ENCODE measurements at regions of chr12 and their contacts with region 1.

Region 1: GRCh38 chr12:14774906-14775762 is 28.1 kb downstream of the WBP11 start:
- DNase-seq: peak; percentile 65
- ATAC-seq: peak; percentile 1
- H3K4me3 ChIP-seq: peak overlapping the region; percentile 92
- H3K27ac ChIP-seq: peak overlapping the region; percentile 98
- H3K4me1 ChIP-seq: peaks cover 6% of the 10 kb centered on the region
- H3K27me3 ChIP-seq: no peaks in the 10 kb centered on the region
- CTCF ChIP-seq: no peak
- POLR2A ChIP-seq: peak; percentile 48
- RAD21 ChIP-seq: no peak

Region 2: DNA sequence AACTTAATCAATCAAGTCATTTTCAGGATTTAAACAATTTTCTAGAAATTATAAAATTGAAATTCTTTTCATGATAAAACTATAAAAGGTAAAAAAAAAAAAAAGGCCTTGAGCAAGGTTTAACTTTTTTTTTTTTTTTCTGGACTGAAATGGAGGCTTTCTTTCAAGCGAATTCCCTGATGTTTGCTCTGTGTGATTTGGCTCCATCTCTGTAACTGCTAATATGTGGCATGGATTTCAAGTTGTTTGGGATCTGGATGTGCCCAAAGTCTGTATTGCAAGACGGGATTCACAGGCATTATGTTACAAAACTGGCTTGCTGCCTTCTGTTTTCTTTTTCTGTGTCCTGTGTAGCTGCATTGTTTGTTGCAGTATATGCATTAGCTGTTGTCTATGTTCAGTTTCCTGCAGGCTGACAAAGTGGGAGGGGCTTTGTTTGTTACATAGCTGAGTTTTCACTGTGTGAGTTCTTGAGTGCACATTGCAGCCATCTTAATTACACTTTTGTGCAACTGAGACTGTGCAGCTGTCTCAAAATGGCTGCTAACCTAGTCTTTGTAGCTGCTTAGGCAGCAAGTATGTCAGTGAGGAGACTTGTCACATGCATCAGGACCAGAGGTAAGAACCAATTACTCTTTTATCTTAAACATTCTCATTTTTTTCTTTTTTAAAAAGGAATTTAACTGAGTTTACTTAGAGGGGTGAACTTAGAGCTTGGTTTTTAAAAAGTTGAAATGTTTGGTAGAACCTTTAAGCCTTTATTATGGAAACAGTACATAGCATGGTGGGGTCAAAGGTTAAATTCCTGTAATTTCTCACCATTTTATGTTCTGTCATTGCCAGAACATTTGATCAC is 390.1 kb before region 1 on chr12:
- CTCF ChIA-PET with region 1: no interaction called
- POLR2A ChIA-PET with region 1: no interaction called
- dilution Hi-C with region 1: no loop called
- in situ Hi-C with region 1: loop called (anchors 25 kb)
- intact Hi-C with region 1: no loop called
- DNase-seq: peak; percentile 95
- ATAC-seq: peak; percentile 93
- H3K4me3 ChIP-seq: peak overlapping the region; percentile 36
- H3K27ac ChIP-seq: peak overlapping the region; percentile 39; the same call in 1 of the 2 replicates
- H3K4me1 ChIP-seq: no peaks in the 10 kb centered on the region
- H3K27me3 ChIP-seq: no peaks in the 10 kb centered on the region
- CTCF ChIP-seq: no peak
- POLR2A ChIP-seq: no peak
- RAD21 ChIP-seq: no peak

Region 3: DNA sequence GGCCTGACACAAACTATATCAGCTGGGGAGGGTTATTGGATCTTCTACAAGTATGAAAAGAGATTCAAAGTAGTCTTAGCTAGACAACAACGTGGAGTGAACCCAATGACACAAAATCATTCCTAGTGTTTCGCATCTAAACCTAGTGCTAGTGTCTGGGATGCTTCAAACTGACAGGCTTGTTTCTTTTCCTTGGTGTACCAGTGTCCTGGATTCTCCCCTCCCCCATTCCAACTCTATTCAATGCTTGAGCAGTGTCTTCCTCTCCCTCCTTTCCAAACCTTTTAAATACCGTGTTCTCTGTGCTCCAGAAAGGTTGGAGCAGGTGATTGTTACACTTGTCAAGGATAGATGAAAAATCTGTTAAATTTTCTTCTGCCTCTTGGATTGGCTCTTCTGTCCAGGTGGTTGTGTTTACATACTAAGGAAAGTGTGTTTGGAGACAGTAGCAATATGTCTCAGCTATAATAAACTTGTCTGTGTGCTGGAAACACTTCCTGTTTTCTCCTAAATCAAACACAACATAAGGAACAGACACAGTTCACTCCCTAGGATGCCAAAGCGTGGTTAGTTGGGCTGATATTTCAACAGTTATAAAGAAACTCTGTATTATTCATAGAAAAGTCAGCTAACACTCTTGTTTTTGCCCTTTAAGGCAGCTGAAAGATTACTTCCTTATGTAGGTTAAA is 64.4 kb before region 1 on chr12:
- CTCF ChIA-PET with region 1: no interaction called
- POLR2A ChIA-PET with region 1: no interaction called
- dilution Hi-C with region 1: no loop called
- in situ Hi-C with region 1: no loop called
- intact Hi-C with region 1: no loop called
- DNase-seq: no peak
- ATAC-seq: no peak
- H3K4me3 ChIP-seq: no peak overlapping the region
- H3K27ac ChIP-seq: no peak overlapping the region
- H3K4me1 ChIP-seq: no peaks in the 10 kb centered on the region
- H3K27me3 ChIP-seq: peaks cover 4% of the 10 kb centered on the region; the same call in 1 of the 2 replicates
- CTCF ChIP-seq: no peak
- POLR2A ChIP-seq: no peak
- RAD21 ChIP-seq: no peak

Region 4: GRCh38 chr12:14756334-14757143 is 18.6 kb before region 1 on chr12:
- CTCF ChIA-PET with region 1: no interaction called
- POLR2A ChIA-PET with region 1: no interaction called
- dilution Hi-C with region 1: no loop called
- in situ Hi-C with region 1: no loop called
- intact Hi-C with region 1: no loop called
- DNase-seq: no peak
- ATAC-seq: no peak
- H3K4me3 ChIP-seq: no peak overlapping the region
- H3K27ac ChIP-seq: no peak overlapping the region
- H3K4me1 ChIP-seq: no peaks in the 10 kb centered on the region
- H3K27me3 ChIP-seq: no peaks in the 10 kb centered on the region
- CTCF ChIP-seq: 0 out of 2 replicates have a peak, but pooled peaks have one; percentile 14
- POLR2A ChIP-seq: no peak
- RAD21 ChIP-seq: no peak

Region 5: DNA sequence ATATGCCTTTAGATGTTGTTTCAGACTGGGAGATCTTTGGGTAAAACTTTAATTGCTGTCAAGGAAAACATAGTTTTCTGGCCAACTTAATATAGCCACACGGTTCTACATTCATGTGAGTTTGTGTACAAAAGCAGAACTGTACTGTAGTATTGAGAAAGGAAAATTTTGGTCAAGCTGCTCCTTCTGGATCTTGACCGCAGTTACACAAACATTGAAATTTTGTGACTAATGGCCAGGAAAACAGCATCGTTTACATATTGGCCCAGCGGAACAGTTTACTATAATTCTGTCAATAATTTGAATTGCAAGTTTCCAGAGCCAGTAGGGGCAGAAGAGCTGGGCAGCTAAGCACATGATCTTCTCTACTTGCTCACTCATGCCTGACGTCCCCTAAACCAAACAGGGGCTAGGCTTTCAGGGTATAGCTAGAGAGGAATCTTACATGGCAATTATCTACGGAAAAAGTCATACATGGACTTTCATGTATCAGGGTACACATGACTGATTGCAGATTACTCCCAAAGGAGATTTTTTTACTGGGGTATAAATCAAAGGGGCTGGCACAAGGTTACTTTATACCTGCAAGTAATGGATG is 79.6 kb after region 1 on chr12:
- CTCF ChIA-PET with region 1: no interaction called
- POLR2A ChIA-PET with region 1: no interaction called
- dilution Hi-C with region 1: no loop called
- in situ Hi-C with region 1: no loop called
- intact Hi-C with region 1: no loop called
- DNase-seq: peak; percentile 16
- ATAC-seq: peak; percentile 44
- H3K4me3 ChIP-seq: no peak overlapping the region
- H3K27ac ChIP-seq: no peak overlapping the region
- H3K4me1 ChIP-seq: peaks cover 2% of the 10 kb centered on the region; the same call in 1 of the 2 replicates
- H3K27me3 ChIP-seq: no peaks in the 10 kb centered on the region
- CTCF ChIP-seq: no peak
- POLR2A ChIP-seq: no peak
- RAD21 ChIP-seq: no peak

Region 6: DNA sequence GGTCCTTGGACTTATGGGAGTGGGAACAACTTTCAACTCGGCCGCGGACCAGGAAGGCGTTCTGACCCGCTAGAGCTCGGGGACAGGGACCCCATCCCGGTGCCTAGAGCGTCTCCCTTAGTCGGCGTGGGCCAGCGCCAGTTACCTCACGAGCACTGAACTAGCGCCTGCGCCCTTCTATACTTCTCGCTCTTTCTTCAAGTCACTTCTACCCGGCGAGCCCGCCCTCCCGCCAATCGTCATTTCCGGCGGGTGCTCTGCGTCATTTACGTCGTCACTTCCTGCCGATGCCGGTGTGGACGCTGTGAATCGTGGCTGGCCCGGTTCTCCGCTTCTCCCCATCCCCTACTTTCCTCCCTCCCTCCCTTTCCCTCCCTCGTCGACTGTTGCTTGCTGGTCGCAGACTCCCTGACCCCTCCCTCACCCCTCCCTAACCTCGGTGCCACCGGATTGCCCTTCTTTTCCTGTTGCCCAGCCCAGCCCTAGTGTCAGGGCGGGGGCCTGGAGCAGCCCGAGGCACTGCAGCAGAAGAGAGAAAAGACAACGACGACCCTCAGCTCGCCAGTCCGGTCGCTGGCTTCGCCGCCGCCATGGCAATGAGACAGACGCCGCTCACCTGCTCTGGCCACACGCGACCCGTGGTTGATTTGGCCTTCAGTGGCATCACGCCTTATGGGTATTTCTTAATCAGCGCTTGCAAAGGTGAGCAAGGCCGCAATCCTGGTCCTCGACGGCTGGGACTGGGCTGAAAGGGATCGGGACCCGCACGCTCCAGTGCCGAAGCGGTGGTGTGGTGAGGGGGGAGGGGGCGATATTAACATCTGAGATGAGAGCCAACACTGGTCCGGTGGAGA is 1107.2 kb after region 1 on chr12 and contains the start of gene STRAP:
- CTCF ChIA-PET with region 1: no interaction called
- POLR2A ChIA-PET with region 1: no interaction called
- dilution Hi-C with region 1: no loop called
- in situ Hi-C with region 1: loop called (anchors 25 kb)
- intact Hi-C with region 1: no loop called
- DNase-seq: peak; percentile 97
- ATAC-seq: peak; percentile 96
- H3K4me3 ChIP-seq: peak within 1 kb of the TSS; percentile 84
- H3K27ac ChIP-seq: peak within 1 kb of the TSS; percentile 97
- H3K4me1 ChIP-seq: peaks cover 9% of the 10 kb centered on the region
- H3K27me3 ChIP-seq: no peaks in the 10 kb centered on the region
- CTCF ChIP-seq: no peak
- POLR2A ChIP-seq: peak; percentile 95
- RAD21 ChIP-seq: no peak
- total RNA-seq, gene STRAP: 82.1 and 133 TPM in 2 replicates